WTC11 (cell line): ENCODE measurements at regions of chr3 and their contacts with region 1.

Region 1: DNA sequence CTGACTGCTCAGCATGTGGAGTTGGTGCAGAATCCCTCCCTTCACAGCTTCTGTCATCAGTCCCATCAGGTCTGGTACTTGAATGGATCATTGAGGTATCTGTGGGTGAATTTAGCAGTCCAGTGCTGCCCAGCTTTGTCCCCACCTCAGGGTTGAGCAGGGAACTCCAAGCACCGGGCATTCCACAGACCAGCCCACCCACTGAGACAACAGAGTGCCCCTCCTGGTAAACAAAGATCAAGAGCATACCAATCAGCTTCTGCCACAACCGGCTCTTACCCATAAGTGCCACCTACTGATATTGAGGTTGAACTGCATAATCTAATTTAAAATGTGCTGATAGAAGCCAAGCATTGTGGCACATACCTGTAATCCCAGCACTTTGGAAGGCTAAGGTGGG is 57.1 kb upstream of the FXR1 start:
- DNase-seq: peak; percentile 68
- ATAC-seq: peak; percentile 96
- H3K4me3 Mint-ChIP-seq: no peak overlapping the region
- H3K27ac Mint-ChIP-seq: no peak overlapping the region
- H3K4me1 Mint-ChIP-seq: peaks cover 19% of the 10 kb centered on the region
- H3K27me3 Mint-ChIP-seq: no peaks in the 10 kb centered on the region
- CTCF ChIP-seq: 0 out of 2 replicates have a peak, but pooled peaks have one; percentile 21

Region 2: DNA sequence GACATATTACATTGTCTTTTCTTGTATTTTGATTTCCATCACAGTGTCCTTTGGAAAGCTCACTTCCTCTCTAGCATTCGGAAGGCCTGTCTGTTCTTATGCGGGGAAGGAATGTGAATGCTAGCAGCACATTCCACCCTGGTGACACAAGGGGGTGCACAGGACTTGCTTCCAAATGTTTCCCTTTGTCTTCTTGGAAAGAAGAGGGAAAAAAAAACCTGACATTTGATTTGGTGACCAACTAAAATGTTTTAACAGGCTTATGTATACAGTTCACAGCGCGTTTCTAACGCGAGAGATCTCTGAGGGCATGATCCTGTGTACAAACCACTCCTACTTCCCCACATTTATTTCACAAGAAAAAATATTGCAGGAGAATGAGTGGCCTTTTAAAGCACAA is 50.4 kb before region 1 on chr3:
- CTCF ChIA-PET with region 1: interaction called, 13 read pairs
- POLR2A ChIA-PET with region 1: no interaction called
- DNase-seq: peak; percentile 67
- ATAC-seq: peak; percentile 100
- H3K4me3 Mint-ChIP-seq: peak overlapping the region; percentile 12; the same call in 1 of the 2 replicates
- H3K27ac Mint-ChIP-seq: peak overlapping the region; percentile 76
- H3K4me1 Mint-ChIP-seq: peaks cover 16% of the 10 kb centered on the region
- H3K27me3 Mint-ChIP-seq: no peaks in the 10 kb centered on the region
- CTCF ChIP-seq: no peak